PC-9 (cell line): ENCODE measurements at regions of chr12 and their contacts with region 1.

Region 1: DNA sequence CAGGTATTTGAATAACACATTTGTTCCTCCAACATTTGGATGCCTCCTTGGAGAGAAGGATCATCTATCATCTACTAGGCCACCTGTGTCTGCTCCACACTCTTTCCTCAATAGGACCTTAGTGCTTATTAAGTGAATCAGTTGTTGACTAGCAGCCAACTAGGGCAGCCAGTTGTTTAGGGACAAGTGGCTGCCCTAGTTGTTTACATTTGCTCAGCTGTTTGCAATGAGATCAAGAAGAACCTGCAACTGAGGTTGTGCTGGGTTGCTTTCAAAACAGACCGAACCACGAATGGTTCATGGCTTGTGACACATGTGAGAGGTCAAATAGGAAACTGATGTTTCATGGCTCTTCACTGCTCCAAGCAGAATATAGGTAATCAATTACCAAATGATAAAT is 53.8 kb downstream of the TMCC3 start:
- DNase-seq: peak; percentile 49 to 99
- H3K4me3 ChIP-seq: no peak overlapping the region
- H3K27ac ChIP-seq: peak overlapping the region; percentile 81
- H3K4me1 ChIP-seq: peaks cover 52% of the 10 kb centered on the region
- H3K27me3 ChIP-seq: no peaks in the 10 kb centered on the region
- CTCF ChIP-seq: no peak

Region 2: GRCh38 chr12:94498073-94498472 is 98.5 kb before region 1 on chr12:
- CTCF ChIA-PET with region 1: no interaction called
- POLR2A ChIA-PET with region 1: no interaction called
- intact Hi-C with region 1: no loop called
- DNase-seq: no peak
- H3K4me3 ChIP-seq: no peak overlapping the region
- H3K27ac ChIP-seq: no peak overlapping the region
- H3K4me1 ChIP-seq: no peaks in the 10 kb centered on the region
- H3K27me3 ChIP-seq: no peaks in the 10 kb centered on the region
- CTCF ChIP-seq: no peak

Region 3: GRCh38 chr12:94553130-94553519 is 43.5 kb before region 1 on chr12:
- CTCF ChIA-PET with region 1: no interaction called
- POLR2A ChIA-PET with region 1: no interaction called
- intact Hi-C with region 1: loop called (anchors 1 kb)
- DNase-seq: peak; percentile 81 to 87
- H3K4me3 ChIP-seq: no peak overlapping the region; the same call in 1 of the 2 replicates
- H3K27ac ChIP-seq: peak overlapping the region; percentile 92
- H3K4me1 ChIP-seq: peaks cover 51% of the 10 kb centered on the region
- H3K27me3 ChIP-seq: no peaks in the 10 kb centered on the region
- CTCF ChIP-seq: no peak

Region 4: GRCh38 chr12:94571556-94571955 is 25.0 kb before region 1 on chr12:
- CTCF ChIA-PET with region 1: no interaction called
- POLR2A ChIA-PET with region 1: no interaction called
- intact Hi-C with region 1: loop called (anchors 2 kb)
- DNase-seq: peak; percentile 74 to 77
- H3K4me3 ChIP-seq: no peak overlapping the region
- H3K27ac ChIP-seq: peak overlapping the region; percentile 72
- H3K4me1 ChIP-seq: peaks cover 36% of the 10 kb centered on the region
- H3K27me3 ChIP-seq: no peaks in the 10 kb centered on the region
- CTCF ChIP-seq: no peak

Region 5: GRCh38 chr12:94644141-94644979 is 47.8 kb after region 1 on chr12:
- CTCF ChIA-PET with region 1: no interaction called
- POLR2A ChIA-PET with region 1: no interaction called
- intact Hi-C with region 1: loop called (anchors 2 kb)
- DNase-seq: peak; percentile 57 to 94
- H3K4me3 ChIP-seq: peak overlapping the region; percentile 45; the same call in 1 of the 2 replicates
- H3K27ac ChIP-seq: peak overlapping the region; percentile 94
- H3K4me1 ChIP-seq: peaks cover 67% of the 10 kb centered on the region
- H3K27me3 ChIP-seq: no peaks in the 10 kb centered on the region
- CTCF ChIP-seq: no peak

Region 6: GRCh38 chr12:94663702-94664101 is 67.1 kb after region 1 on chr12:
- CTCF ChIA-PET with region 1: no interaction called
- POLR2A ChIA-PET with region 1: no interaction called
- intact Hi-C with region 1: no loop called
- DNase-seq: no peak
- H3K4me3 ChIP-seq: no peak overlapping the region
- H3K27ac ChIP-seq: no peak overlapping the region
- H3K4me1 ChIP-seq: no peaks in the 10 kb centered on the region
- H3K27me3 ChIP-seq: no peaks in the 10 kb centered on the region
- CTCF ChIP-seq: no peak

Region 7: DNA sequence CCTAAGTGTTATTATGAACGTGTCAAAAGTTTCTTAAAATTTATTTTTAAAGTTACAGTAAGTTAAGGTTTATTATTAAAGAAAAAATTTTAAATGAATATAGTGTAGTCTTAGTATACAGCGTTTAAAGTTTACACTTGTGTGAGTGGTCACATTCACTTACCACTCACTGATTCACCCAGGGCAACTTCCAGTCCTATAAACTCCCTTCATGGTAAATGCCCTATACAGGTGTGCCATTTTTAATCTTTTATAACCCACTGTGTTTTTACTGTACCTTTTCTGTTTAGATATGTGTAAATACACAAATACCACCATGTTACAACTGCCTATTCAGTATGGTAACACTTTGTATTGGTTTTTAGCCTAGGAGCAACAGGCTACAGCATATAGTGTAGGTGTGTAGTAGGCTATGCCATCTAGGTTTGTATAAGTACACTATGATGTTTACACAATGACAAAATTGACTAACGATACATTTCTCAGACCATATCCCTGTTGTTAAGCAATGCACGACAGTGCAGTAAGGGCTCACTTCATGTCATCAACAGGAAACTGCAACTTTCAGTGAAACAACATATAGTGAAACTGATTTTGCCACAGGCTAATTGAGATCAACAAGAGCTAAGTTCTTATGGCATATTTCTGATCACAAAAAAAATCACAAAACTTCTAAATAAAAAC is 165.8 kb after region 1 on chr12:
- CTCF ChIA-PET with region 1: no interaction called
- POLR2A ChIA-PET with region 1: interaction called, 8 read pairs
- intact Hi-C with region 1: loop called (anchors 5 kb)
- DNase-seq: peak in 1 of 2 experiments; percentile 72
- H3K4me3 ChIP-seq: no peak overlapping the region
- H3K27ac ChIP-seq: peak overlapping the region; percentile 67
- H3K4me1 ChIP-seq: peaks cover 30% of the 10 kb centered on the region
- H3K27me3 ChIP-seq: no peaks in the 10 kb centered on the region
- CTCF ChIP-seq: no peak